Activated CD8-positive, alpha-beta T cell treated with anti-CD3 and anti-CD28 coated beads, Interleukin-2, amount 10 ng/mL, durations not matched to agents 7 days and 5 days (primary cell): ENCODE measurements at regions of chr17 and their contacts with region 1.

Region 1: GRCh38 chr17:27601069-27601975 is 29.7 kb upstream of the LGALS9 start:
- DNase-seq: peak; percentile 88
- ATAC-seq: peak; percentile 31
- H3K4me3 Mint-ChIP-seq: no peak overlapping the region
- H3K27ac Mint-ChIP-seq: no peak overlapping the region
- H3K4me1 Mint-ChIP-seq: peaks cover 16% of the 10 kb centered on the region
- H3K27me3 Mint-ChIP-seq: no peaks in the 10 kb centered on the region

Region 2: GRCh38 chr17:27236717-27237315 is 364.5 kb before region 1 on chr17:
- CTCF ChIA-PET with region 1: interaction called, 86 read pairs
- POLR2A ChIA-PET with region 1: no interaction called
- DNase-seq: peak; percentile 83
- ATAC-seq: peak; percentile 65
- H3K4me3 Mint-ChIP-seq: no peak overlapping the region
- H3K27ac Mint-ChIP-seq: no peak overlapping the region
- H3K4me1 Mint-ChIP-seq: peaks cover 20% of the 10 kb centered on the region
- H3K27me3 Mint-ChIP-seq: peaks cover 11% of the 10 kb centered on the region

Region 3: DNA sequence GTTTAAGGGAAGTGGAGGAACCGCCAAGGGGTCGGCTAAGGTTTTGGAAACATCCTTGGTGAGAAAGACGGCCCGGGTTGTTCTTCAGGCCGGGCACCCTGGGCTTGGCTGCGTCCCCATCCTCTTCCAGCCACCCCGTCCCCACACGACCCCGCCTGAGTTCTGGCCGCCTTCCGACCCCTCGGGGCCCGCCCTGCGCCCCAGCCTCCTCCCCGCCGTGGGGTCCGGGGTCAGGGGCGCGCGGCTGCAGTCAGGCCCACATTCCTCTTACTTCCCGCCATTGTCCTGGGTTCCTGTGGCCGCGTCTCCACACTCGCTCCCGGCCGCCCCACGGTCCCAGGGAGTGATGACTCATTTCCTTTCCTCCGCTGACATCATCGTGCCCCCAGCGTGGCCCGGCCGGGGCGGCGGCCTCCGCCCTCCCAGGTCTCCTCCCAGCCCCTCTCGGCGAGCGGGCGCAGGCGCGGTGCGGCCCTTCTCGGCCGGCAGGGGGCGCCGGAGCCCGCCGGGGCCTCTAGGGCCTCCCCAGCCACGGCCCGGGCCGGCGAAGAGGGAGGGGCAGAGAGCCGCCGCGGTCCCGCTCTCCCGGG is 247.8 kb before region 1 on chr17:
- CTCF ChIA-PET with region 1: interaction called, 48 read pairs
- POLR2A ChIA-PET with region 1: interaction called, 4 read pairs
- DNase-seq: peak; percentile 92
- ATAC-seq: peak; percentile 95
- H3K4me3 Mint-ChIP-seq: peak overlapping the region; percentile 81
- H3K27ac Mint-ChIP-seq: peak overlapping the region; percentile 95
- H3K4me1 Mint-ChIP-seq: peaks cover 24% of the 10 kb centered on the region
- H3K27me3 Mint-ChIP-seq: no peaks in the 10 kb centered on the region

Region 4: DNA sequence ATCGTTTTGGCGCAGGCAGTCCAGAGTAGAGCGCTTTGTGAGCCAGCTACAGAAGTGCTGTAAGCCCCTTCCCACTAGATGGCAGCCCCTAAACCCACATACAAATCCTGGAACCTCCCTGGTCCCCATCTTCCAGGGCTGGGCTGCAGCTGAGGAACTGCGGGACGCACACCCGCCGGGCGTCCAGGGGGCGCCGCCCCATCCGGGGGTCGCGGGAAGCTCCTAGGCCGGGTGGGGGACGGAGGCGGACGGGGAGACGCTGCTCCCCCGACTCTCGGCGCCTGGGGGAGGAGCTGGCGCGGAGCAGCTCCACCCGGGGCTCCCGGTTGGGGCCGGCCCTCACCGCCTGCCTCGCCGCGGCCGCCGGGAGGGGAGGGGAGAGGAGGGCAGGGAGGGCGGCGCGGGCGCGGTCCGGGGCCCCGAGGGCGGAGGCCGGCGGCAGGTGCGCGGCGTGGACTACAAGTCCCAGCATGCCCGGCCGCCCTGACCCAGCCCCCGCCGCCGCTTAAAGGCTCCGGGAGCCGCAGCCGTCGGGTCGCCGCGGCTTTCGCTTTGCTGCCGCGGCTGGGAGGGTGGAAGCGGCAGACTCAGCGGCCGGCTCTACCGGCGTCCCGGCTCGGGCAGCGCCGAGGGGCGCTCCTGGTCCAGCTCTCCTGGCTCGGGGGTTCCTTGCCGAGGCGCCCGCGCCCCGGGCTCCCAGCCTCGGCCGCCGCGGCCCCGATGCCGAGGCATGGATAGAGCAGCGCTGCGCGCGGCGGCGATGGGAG is 145.2 kb before region 1 on chr17 and contains the start of gene KSR1:
- CTCF ChIA-PET with region 1: interaction called, 37 read pairs
- POLR2A ChIA-PET with region 1: no interaction called
- DNase-seq: peak; percentile 89
- ATAC-seq: peak; percentile 93
- H3K4me3 Mint-ChIP-seq: peak within 1 kb of the TSS; percentile 94
- H3K27ac Mint-ChIP-seq: peak within 1 kb of the TSS; percentile 76
- H3K4me1 Mint-ChIP-seq: peaks cover 50% of the 10 kb centered on the region
- H3K27me3 Mint-ChIP-seq: no peaks in the 10 kb centered on the region
- total RNA-seq, gene KSR1: 45.3 to 45.8 TPM

Region 5: DNA sequence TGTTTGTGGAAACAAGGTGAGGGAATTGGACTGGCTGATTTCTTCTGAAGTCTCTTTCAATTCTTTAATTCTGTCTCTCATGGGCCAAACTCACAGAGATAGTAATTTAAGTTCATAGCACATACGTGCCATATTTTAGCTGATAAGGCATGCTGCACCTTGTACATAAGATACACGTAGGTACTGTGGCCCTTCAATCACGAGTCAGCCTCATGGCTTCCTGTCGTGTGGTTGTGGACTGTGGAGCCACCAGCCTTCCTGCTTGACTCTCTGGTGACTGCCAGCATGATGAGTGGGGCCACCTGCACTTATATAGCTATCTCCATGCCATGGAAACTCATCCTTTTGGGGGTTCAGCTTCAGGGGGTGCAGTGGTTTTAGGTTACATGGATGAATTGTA is 120.0 kb before region 1 on chr17:
- CTCF ChIA-PET with region 1: interaction called, 16 read pairs
- POLR2A ChIA-PET with region 1: no interaction called
- DNase-seq: peak; percentile 86
- ATAC-seq: peak; percentile 97
- H3K4me3 Mint-ChIP-seq: peak overlapping the region; percentile 43
- H3K27ac Mint-ChIP-seq: peak overlapping the region; percentile 82
- H3K4me1 Mint-ChIP-seq: peaks cover 80% of the 10 kb centered on the region
- H3K27me3 Mint-ChIP-seq: no peaks in the 10 kb centered on the region

Region 6: DNA sequence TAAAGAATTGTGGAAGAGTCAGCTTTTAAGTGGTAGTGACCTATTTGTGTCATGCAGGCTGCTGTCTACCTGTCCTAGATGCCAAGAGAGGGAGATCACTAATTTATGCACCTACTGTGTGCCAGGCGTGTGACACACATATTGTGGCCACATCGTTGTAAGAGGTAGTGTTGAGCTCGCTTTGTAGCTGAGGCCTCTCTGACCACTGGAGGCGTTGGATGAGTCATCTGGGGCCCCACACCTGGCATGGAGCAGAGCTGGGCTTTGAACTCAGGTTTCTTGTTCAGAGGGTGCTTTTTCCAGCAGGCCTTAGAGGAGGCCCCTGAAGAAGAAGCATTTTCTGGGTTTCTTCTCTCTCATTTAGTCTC is 22.6 kb before region 1 on chr17:
- CTCF ChIA-PET with region 1: interaction called, 73 read pairs
- POLR2A ChIA-PET with region 1: interaction called, 4 read pairs
- DNase-seq: peak; percentile 70
- ATAC-seq: peak; percentile 81
- H3K4me3 Mint-ChIP-seq: no peak overlapping the region
- H3K27ac Mint-ChIP-seq: peak overlapping the region; percentile 86
- H3K4me1 Mint-ChIP-seq: peaks cover 79% of the 10 kb centered on the region
- H3K27me3 Mint-ChIP-seq: no peaks in the 10 kb centered on the region

Region 7: GRCh38 chr17:27666831-27667560 is 65.7 kb after region 1 on chr17:
- CTCF ChIA-PET with region 1: no interaction called
- POLR2A ChIA-PET with region 1: no interaction called
- DNase-seq: no peak
- ATAC-seq: no peak
- H3K4me3 Mint-ChIP-seq: no peak overlapping the region
- H3K27ac Mint-ChIP-seq: no peak overlapping the region
- H3K4me1 Mint-ChIP-seq: no peaks in the 10 kb centered on the region
- H3K27me3 Mint-ChIP-seq: no peaks in the 10 kb centered on the region

Region 8: DNA sequence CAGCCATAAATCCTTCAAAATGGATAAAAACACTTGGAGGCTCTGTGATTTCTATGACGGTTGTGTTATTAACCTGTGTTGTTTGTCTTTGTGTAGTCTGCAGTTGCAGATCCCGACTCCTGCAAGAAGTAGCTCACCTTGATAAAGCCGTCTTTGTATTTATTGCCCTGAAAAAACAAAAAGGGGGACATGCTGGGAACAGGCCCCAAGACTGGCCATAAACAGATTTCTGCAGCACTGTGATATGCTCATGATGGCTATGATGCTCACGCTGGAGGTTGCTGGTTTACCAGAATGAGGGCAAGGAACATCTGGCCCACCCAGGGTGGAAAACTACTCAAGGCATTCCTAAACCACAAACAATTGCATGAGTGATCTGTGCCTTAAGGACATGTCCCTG is 100.6 kb after region 1 on chr17:
- CTCF ChIA-PET with region 1: no interaction called
- POLR2A ChIA-PET with region 1: no interaction called
- DNase-seq: no peak
- ATAC-seq: no peak
- H3K4me3 Mint-ChIP-seq: no peak overlapping the region
- H3K27ac Mint-ChIP-seq: no peak overlapping the region
- H3K4me1 Mint-ChIP-seq: no peaks in the 10 kb centered on the region
- H3K27me3 Mint-ChIP-seq: peaks cover 15% of the 10 kb centered on the region